Activated T-helper 1 cell treated with anti-CD3 and anti-CD28 coated beads, Interleukin-12 subunit alpha, Interleukin-12 subunit beta, Interleukin-2, Interleukin-4 antibody, amounts not matched to agents 30 ng/mL and 10 ng/mL and 1 ng/mL, durations not matched to agents 14 hours and 24 hours and 36 hours (primary cell): ENCODE measurements at regions of chr13 and their contacts with region 1.

Region 1: DNA sequence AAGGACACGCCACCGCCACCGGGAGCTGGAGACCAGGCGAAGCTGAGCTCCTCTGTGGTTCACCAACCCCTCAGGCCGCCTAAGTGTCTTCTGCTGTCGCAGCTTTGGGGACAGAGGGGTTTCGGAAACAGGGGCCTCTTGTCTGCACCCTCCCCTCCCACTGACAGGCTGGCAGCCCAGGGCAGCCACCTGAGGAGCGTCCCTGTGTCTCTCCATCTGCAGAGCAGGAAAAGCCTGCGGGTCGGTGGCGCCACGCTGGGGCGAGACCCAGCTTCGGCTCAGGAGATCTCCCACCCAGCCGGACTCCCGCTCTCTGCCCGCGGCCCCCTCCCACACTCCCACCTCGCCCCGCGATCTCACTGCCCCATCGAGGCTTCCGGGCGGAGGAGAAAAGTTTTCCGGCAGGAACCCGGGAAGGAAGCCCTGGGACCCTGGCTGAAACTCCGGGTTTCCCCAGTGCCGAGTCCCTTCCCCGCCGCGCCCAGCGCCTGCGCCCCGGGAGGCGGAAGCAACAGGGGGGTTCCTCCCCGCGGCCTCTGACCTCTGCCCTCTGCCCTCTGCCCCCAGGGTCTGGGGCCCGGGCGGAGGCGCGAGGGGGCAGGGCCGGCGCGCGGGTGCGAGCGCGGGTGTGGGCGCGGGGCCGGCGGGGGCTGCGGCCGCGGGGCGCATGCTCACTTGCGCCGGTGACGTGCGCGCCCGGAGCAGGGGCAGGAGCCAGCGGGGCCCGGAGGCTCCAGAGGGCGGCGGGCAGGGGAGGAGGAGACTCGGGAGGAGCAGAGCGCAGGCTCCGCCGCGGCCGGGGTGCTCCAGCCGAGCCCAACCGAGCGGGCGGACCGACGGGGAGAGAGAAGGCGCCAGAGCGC is at the start of gene ATP11A:
- DNase-seq: peak; percentile 81
- H3K4me3 Mint-ChIP-seq: peak within 1 kb of the TSS; percentile 84
- H3K27ac Mint-ChIP-seq: peak within 1 kb of the TSS; percentile 94
- H3K4me1 Mint-ChIP-seq: peaks cover 59% of the 10 kb centered on the region
- H3K27me3 Mint-ChIP-seq: no peaks in the 10 kb centered on the region
- total RNA-seq, gene ATP11A: 90.4 and 97.8 TPM in 2 replicates

Region 2: DNA sequence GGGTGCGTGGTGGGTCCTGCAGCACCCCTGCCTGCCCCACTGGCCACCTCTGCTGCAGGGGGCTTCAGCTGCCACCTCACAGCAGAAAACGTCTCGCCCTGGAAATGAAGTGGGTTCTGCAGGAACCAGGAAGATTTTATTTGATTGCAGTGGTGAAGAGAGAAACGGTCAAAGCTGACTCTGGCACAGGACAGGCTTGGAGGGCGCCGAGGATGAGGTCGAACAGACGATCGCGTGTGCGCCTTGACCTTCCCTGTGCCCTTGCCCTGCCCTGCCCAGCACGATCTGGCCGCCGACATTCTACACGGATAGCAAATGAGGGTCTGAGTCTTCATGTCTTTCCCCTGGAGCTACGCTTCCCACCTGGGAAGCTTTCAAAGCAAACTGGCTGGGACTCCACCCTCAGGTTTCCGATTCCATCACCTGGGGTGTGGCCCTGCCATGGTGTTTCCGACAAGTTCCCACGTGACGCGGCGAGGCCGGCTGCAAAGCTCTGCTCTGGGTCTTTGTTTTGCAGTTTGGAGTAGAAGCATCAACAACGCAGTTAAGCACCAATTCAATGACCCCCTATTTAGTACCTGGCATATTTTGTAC is 51.3 kb before region 1 on chr13:
- intact Hi-C with region 1: loop called (anchors 1 kb)
- DNase-seq: no peak
- H3K4me3 Mint-ChIP-seq: no peak overlapping the region
- H3K27ac Mint-ChIP-seq: no peak overlapping the region
- H3K4me1 Mint-ChIP-seq: peaks cover 7% of the 10 kb centered on the region
- H3K27me3 Mint-ChIP-seq: peaks cover 22% of the 10 kb centered on the region

Region 3: DNA sequence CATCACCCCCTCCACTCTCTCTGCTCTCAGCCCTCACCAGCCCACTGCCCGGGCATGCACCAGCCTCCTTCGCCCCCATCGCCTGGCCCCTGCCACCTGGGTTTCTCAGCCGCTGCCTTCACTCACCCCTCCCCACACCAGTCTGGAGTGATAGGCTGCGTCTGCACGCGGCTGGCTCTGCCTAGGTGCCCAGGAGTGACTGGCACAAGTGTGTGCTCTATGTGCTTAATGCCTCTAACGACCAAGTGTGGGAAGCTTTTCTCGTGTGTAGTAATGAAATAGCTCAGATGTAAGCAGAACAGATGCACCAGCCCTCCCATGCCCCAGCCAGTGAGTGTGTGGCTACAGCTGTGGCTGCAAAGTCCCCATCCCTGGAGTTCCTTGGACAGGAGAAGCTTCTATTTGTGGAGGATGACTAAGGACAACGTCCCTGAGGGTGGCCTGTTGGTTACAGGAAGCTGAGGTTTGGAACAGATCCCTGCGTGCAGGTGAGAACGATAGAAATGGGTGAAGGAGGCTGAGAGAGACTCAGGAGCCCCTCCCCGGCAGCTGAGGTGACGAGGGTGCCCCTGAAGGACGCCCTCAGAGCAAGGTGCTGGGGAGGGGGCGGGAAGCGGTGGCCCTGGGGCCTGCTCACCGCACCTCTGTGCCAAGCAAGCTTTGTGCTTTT is 35.9 kb after region 1 on chr13:
- intact Hi-C with region 1: no loop called
- DNase-seq: no peak
- H3K4me3 Mint-ChIP-seq: peak overlapping the region; percentile 38
- H3K27ac Mint-ChIP-seq: no peak overlapping the region
- H3K4me1 Mint-ChIP-seq: peaks cover 27% of the 10 kb centered on the region
- H3K27me3 Mint-ChIP-seq: no peaks in the 10 kb centered on the region

Region 4: DNA sequence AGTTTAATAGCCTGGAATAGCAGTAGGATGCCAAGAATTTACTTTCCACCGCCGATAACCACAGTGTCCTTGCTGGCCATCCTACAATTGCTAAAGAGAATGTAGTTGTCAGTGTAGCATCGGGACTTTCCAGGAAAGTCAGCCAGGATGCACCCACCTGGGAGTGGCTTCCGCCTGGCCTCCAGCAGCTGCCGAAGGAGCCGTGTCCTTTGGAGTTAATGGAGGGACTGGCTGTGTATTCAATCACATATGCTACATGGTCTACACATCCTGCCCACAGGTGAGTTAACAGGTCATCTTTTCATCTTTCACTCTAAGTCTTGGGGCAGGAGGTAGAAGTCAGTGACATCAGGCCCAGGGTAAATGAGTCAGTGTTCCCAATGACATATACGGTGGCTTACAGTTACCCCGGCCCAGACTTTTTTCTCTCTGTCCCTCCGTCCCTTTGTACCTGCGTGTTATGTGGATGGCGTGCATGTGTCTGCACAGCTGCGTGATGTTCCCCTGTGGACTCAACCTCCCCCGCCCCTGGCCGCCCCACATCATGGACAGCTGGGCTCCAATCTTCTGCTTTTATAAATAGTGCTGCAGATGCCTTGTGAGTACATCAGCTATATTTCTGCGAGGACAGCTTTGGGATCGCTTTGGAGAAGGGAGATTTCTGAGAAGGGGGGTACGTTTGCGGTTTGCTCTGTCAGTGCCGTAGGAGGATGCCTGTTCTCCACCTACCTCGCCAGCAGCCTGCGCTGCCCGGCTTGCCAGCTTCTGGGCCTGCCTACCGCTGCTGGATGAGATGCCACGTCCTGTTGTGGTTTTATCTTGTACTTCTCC is 63.4 kb after region 1 on chr13:
- intact Hi-C with region 1: loop called (anchors 1 kb)
- DNase-seq: no peak
- H3K4me3 Mint-ChIP-seq: no peak overlapping the region
- H3K27ac Mint-ChIP-seq: peak overlapping the region; percentile 34
- H3K4me1 Mint-ChIP-seq: peaks cover 13% of the 10 kb centered on the region
- H3K27me3 Mint-ChIP-seq: no peaks in the 10 kb centered on the region